Spleen (tissue), 13 donors: ENCODE measurements at regions of chr20 and their contacts with region 1.

Region 1: GRCh38 chr20:48620519-48621254 is 207.1 kb downstream of the PREX1 start:
- DNase-seq: peak; percentile 91
- H3K4me3 ChIP-seq: peak overlapping the region in 3 of 8 donors; percentile 1 to 23 (median 7)
- H3K27ac ChIP-seq: peak overlapping the region in 1 of 8 donors; percentile 9
- H3K4me1 ChIP-seq: peaks cover 7 to 28% (median 19%) of the 10 kb centered on the region in 6 donors
- H3K27me3 ChIP-seq: no peaks in the 10 kb centered on the region
- CTCF ChIP-seq: peak; percentile 52 to 92 (median 81)
- POLR2A ChIP-seq: no peak

Region 2: DNA sequence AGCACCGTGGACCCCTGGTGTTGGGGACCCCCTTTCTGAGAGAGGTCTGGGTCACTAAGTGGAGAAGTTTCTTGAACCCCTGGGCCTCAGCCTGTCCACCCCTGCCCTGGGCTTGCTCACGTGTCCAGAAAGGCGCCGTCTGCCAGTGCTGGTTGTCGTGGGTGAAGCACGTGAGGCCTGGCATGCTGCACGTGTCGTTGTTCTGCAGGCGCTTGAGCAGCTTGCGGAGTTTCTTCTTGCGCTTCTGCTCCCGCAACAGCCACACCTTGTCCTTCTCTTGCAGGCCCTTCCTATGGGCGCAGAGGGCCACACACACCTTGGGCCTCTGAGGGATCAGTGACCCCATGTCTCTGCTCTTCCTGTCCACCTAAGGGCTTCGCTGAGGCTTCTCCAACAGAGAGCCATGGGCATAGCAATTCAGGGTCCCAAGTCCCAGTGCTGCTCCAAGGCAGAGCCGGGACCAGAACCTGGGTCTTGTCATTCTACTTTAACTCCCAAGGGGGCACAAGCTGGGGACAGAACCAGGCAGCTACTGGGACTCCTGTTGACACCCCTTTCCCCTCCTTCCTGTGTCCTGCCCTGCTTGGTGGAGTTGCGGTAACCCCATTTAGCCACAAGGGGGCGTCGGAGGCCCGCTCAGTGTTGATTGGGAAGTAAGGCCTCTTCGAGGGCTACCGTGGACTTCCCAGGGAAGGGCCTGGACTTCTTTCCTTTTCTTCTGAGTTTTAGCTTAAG is 957.2 kb before region 1 on chr20:
- intact Hi-C with region 1: loop called (anchors 5 kb)
- DNase-seq: peak; percentile 92
- H3K4me3 ChIP-seq: no peak overlapping the region
- H3K27ac ChIP-seq: no peak overlapping the region
- H3K4me1 ChIP-seq: peaks cover 0 to 12% (median 7%) of the 10 kb centered on the region in 6 donors
- H3K27me3 ChIP-seq: no peaks in the 10 kb centered on the region
- CTCF ChIP-seq: peak; percentile 82 to 98 (median 95)
- POLR2A ChIP-seq: no peak

Region 3: GRCh38 chr20:47677635-47678453 is 942.8 kb before region 1 on chr20:
- intact Hi-C with region 1: loop called (anchors 5 kb)
- DNase-seq: peak; percentile 85
- H3K4me3 ChIP-seq: no peak overlapping the region
- H3K27ac ChIP-seq: no peak overlapping the region
- H3K4me1 ChIP-seq: peaks cover 0 to 22% (median 11%) of the 10 kb centered on the region in 6 donors
- H3K27me3 ChIP-seq: peaks cover 0 to 13% (median 0%) of the 10 kb centered on the region in 7 donors
- CTCF ChIP-seq: peak in 10 of 11 experiments; percentile 52 to 83 (median 74)
- POLR2A ChIP-seq: no peak

Region 4: GRCh38 chr20:47785854-47786764 is 834.6 kb before region 1 on chr20:
- intact Hi-C with region 1: loop called (anchors 5 kb)
- DNase-seq: no peak
- H3K4me3 ChIP-seq: peak overlapping the region; percentile 23 to 71 (median 46)
- H3K27ac ChIP-seq: peak overlapping the region in 5 of 8 donors; percentile 7 to 64 (median 38)
- H3K4me1 ChIP-seq: peaks cover 12 to 30% (median 23%) of the 10 kb centered on the region in 6 donors
- H3K27me3 ChIP-seq: peaks cover 0 to 86% (median 35%) of the 10 kb centered on the region in 7 donors
- CTCF ChIP-seq: peak; percentile 20 to 79 (median 60)
- POLR2A ChIP-seq: no peak

Region 5: DNA sequence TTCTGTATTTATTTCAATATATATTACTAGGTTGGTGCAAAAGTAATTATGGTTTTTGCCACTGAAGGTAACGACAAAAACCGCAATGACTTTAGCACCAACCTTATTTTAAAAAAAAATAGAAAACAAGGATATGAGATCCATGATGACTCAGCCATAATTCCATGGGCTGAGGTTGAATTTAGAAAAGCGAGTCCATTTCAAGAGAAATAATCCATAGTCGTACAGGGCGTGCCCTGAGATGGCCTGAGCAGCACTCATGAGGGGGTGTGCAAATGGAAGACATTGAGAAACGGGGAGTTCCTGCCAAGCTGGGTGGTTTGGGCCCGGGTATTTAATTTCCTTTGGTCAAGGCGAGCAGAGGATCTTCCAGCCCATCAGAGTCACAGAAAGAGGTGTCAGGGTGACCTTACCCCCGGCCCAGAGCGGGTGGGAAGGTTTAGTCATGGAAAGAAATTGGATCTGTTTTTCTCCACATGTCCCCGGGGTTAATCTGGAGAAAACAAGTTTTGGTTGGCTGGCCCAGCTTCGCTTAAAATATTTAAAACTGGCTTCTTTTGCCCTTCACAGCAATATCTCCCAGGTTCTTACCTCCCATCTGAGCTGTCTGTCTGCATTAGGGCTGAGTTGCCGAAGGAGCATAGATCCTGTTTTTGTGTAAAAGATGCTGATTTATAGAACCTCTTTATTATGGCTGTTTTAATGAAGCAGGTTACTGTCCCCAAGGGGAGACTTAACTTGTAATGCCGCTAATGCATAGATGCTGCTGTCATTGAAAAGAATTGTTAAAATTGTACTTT is 48.5 kb before region 1 on chr20:
- intact Hi-C with region 1: no loop called
- DNase-seq: peak; percentile 11
- H3K4me3 ChIP-seq: no peak overlapping the region
- H3K27ac ChIP-seq: no peak overlapping the region
- H3K4me1 ChIP-seq: no peaks in the 10 kb centered on the region
- H3K27me3 ChIP-seq: peaks cover 0 to 26% (median 0%) of the 10 kb centered on the region in 7 donors
- CTCF ChIP-seq: no peak
- POLR2A ChIP-seq: no peak